Naive thymus-derived CD4-positive, alpha-beta T cell (primary cell): ENCODE measurements at regions of chr4 and their contacts with region 1.

Region 1: DNA sequence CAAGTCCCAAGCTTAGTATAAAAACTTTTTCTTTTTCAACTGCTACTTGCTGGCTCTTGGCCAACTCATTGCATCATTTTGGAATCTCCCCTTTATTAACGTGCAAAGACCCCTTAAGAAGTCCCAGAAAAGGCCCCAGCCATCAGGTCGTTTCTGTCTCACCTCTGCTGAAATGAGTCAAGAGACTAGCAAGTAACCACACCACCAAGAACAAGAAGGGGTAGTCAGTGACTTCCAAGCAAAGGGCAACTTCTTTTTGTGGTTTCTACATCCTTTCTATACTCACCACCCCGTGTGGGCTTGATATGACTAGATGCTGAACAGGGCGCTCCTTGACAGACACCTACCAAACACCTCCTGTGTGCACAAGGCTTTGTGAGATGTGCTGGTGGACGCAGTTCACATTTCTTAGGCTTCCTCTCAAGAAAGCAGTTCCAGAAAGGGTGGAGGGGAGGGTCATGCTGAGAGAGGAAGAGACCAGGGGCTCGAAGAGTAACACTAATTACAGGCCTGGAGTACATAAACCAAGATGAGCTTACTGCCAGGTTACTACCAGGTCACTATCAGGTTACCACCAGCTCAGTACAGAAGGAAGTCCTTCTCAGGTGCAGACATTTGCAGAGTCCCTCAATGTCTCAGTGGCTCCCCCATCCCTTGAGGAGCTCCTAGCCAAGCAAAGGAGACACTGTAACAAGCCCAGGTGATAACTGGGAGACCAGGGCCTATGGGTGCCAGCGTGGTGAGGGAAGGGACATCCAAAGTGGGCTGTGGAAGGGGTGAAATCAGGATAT is 19.3 kb downstream of the JAKMIP1 start:
- DNase-seq: peak in 2 of 9 donors; percentile 18 to 52
- ATAC-seq: peak; percentile 74
- H3K4me3 ChIP-seq: no peak overlapping the region
- H3K4me3 Mint-ChIP-seq: peak overlapping the region in 2 of 10 donors; percentile 47 to 73
- H3K27ac ChIP-seq: no peak overlapping the region
- H3K27ac Mint-ChIP-seq: peak overlapping the region in 1 of 9 donors; percentile 96
- H3K4me1 ChIP-seq: peaks cover 0 to 81% of the 10 kb centered on the region in 2 donors
- H3K4me1 Mint-ChIP-seq: peaks cover 0 to 79% (median 10%) of the 10 kb centered on the region in 7 donors
- H3K27me3 ChIP-seq: no peaks in the 10 kb centered on the region
- H3K27me3 Mint-ChIP-seq: peaks cover 0 to 39% (median 9%) of the 10 kb centered on the region in 5 donors

Region 2: DNA sequence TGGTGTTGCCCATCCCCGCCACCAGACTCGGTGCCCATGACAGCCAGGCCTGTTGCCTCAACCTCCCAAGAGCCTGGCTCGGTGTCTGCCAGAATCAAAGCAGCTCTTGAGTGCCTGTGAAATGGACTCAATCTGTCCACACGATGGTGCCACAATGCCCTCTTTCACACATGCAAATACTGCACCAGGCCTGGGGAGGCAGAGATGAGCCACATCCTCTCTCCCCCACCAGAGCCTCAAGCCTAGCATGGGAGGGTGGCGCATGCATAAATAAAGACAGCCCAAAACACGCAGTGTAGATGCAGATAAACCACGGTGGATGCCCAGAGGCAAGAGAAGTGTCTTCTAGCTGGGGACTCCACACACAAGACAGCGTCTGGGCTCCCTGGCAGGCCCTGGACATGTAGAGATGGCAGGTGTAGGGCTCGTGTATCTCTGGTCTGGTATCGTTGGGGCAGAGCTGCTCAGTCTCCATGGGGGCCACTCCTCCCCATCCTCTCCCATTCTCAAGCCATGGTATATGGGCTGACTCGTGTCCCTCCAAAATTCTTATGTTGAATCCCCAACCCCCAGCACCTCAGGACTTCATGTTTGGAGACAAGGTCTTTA is 46.3 kb before region 1 on chr4:
- CTCF ChIA-PET with region 1: no interaction called
- POLR2A ChIA-PET with region 1: no interaction called
- intact Hi-C with region 1: loop called in 1 of 2 experiments (anchors 2 kb)
- DNase-seq: peak in 1 of 9 donors; percentile 11
- ATAC-seq: peak; percentile 86
- H3K4me3 ChIP-seq: no peak overlapping the region
- H3K4me3 Mint-ChIP-seq: no peak overlapping the region
- H3K27ac ChIP-seq: no peak overlapping the region
- H3K27ac Mint-ChIP-seq: no peak overlapping the region
- H3K4me1 ChIP-seq: peaks cover 0 to 5% of the 10 kb centered on the region in 2 donors
- H3K4me1 Mint-ChIP-seq: peaks cover 0 to 11% (median 0%) of the 10 kb centered on the region in 7 donors
- H3K27me3 ChIP-seq: no peaks in the 10 kb centered on the region
- H3K27me3 Mint-ChIP-seq: peaks cover 0 to 9% (median 7%) of the 10 kb centered on the region in 5 donors

Region 3: GRCh38 chr4:6153874-6154273 is 27.2 kb before region 1 on chr4:
- CTCF ChIA-PET with region 1: no interaction called
- POLR2A ChIA-PET with region 1: no interaction called
- intact Hi-C with region 1: loop called in 1 of 2 experiments (anchors 2 kb)
- DNase-seq: no peak
- ATAC-seq: no peak
- H3K4me3 ChIP-seq: no peak overlapping the region
- H3K4me3 Mint-ChIP-seq: no peak overlapping the region
- H3K27ac ChIP-seq: no peak overlapping the region
- H3K27ac Mint-ChIP-seq: no peak overlapping the region
- H3K4me1 ChIP-seq: peaks cover 0 to 9% of the 10 kb centered on the region in 2 donors
- H3K4me1 Mint-ChIP-seq: peaks cover 0 to 41% (median 0%) of the 10 kb centered on the region in 7 donors
- H3K27me3 ChIP-seq: no peaks in the 10 kb centered on the region
- H3K27me3 Mint-ChIP-seq: peaks cover 0 to 20% (median 10%) of the 10 kb centered on the region in 5 donors

Region 4: DNA sequence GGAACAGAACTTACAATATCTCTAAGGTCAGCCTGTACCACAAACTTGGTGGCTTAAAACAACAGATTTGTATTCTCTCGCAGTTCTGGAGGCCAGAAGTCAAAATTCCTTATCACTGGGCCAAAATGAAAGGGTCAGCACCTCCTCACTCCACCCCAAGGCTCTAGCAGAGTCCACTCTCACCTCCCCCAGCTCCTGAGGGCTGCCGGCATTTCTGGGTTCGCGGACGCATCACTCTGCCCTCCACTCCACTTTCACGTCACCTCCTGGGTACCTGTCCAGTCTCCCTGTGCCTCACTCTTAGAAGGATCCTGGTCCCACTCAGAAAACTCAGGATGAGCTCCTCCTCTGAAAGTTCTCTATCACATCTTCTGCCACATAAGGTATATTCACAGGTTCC is 15.3 kb before region 1 on chr4:
- CTCF ChIA-PET with region 1: no interaction called
- POLR2A ChIA-PET with region 1: no interaction called
- intact Hi-C with region 1: no loop called
- DNase-seq: no peak
- ATAC-seq: no peak
- H3K4me3 ChIP-seq: no peak overlapping the region
- H3K4me3 Mint-ChIP-seq: no peak overlapping the region
- H3K27ac ChIP-seq: no peak overlapping the region
- H3K27ac Mint-ChIP-seq: no peak overlapping the region
- H3K4me1 ChIP-seq: no peaks in the 10 kb centered on the region
- H3K4me1 Mint-ChIP-seq: peaks cover 0 to 41% (median 0%) of the 10 kb centered on the region in 7 donors
- H3K27me3 ChIP-seq: no peaks in the 10 kb centered on the region
- H3K27me3 Mint-ChIP-seq: peaks cover 0 to 14% (median 0%) of the 10 kb centered on the region in 5 donors

Region 5: GRCh38 chr4:6200011-6200921 is 19.2 kb after region 1 on chr4 and contains the start of gene JAKMIP1:
- CTCF ChIA-PET with region 1: no interaction called
- POLR2A ChIA-PET with region 1: no interaction called
- intact Hi-C with region 1: loop called in 1 of 2 experiments (anchors 1 kb)
- DNase-seq: peak; percentile 1 to 96 (median 43)
- ATAC-seq: peak; percentile 81
- H3K4me3 ChIP-seq: peak within 1 kb of the TSS; percentile 43
- H3K4me3 Mint-ChIP-seq: peak within 1 kb of the TSS; percentile 61 to 89 (median 76)
- H3K27ac ChIP-seq: no peak within 1 kb of the TSS
- H3K27ac Mint-ChIP-seq: peak within 1 kb of the TSS in 2 of 9 donors; percentile 71 to 73
- H3K4me1 ChIP-seq: peaks cover 8 to 30% of the 10 kb centered on the region in 2 donors
- H3K4me1 Mint-ChIP-seq: peaks cover 5 to 28% (median 17%) of the 10 kb centered on the region in 7 donors
- H3K27me3 ChIP-seq: peaks cover 0 to 6% of the 10 kb centered on the region in 2 donors
- H3K27me3 Mint-ChIP-seq: peaks cover 36 to 66% (median 45%) of the 10 kb centered on the region in 5 donors
- total RNA-seq, gene JAKMIP1: 0.66 to 15.3 (median 4.1) TPM in 3 of 5 experiments, not detected in the others

Region 6: DNA sequence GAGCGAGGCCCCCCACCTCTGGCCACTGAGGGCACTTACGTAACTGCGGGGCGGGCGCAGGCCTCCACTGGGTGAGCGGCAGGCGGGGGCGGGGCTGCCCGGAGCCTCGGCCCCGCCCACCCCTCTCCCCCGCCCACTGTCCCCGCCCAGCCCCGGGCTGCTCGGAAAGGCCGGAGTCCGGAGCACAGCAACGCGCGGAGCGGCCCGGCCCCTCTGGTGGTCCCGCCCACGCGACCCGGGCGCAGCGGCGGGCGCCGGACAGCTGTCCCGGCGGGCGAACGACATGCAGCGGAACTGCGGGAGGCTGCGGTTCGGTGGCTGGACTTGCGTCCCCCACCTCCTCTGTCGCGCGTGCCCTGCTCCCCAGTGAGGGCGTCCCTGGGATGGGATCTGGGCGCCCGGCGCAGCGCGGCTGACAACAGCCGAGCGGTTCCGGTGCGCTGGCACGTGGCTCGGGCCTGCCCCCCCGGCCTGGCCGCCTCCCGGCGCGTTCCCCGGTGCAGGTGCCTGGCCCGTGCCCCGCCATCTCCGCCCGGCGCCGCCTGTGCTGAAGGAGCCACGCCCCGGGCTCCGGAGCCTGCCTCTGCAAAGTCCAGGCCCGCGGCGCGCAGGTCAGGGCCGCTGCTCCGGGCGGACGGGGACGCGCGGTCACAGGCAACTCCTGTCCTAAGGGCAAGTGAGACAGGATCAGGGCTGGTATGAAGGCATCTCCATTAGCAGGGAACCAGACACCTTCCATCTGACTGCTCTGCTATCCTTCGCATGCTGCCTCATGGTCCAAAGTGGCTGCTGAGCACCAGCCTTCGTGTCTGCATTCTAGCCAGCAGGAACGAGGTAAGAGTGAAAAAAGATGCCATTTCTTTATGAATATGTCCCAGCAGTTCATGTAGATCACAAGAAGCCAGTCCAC is 41.1 kb after region 1 on chr4:
- CTCF ChIA-PET with region 1: no interaction called
- POLR2A ChIA-PET with region 1: no interaction called
- intact Hi-C with region 1: no loop called
- DNase-seq: no peak
- ATAC-seq: peak; percentile 72
- H3K4me3 ChIP-seq: no peak overlapping the region
- H3K4me3 Mint-ChIP-seq: peak overlapping the region in 1 of 10 donors; percentile 14
- H3K27ac ChIP-seq: no peak overlapping the region
- H3K27ac Mint-ChIP-seq: no peak overlapping the region
- H3K4me1 ChIP-seq: peaks cover 0 to 4% of the 10 kb centered on the region in 2 donors
- H3K4me1 Mint-ChIP-seq: peaks cover 0 to 4% (median 0%) of the 10 kb centered on the region in 7 donors
- H3K27me3 ChIP-seq: peaks cover 0 to 4% of the 10 kb centered on the region in 2 donors
- H3K27me3 Mint-ChIP-seq: peaks cover 44 to 71% (median 68%) of the 10 kb centered on the region in 5 donors